ENCODE measurements at regions of chr13 and their contacts with region 1.

Region 1: DNA sequence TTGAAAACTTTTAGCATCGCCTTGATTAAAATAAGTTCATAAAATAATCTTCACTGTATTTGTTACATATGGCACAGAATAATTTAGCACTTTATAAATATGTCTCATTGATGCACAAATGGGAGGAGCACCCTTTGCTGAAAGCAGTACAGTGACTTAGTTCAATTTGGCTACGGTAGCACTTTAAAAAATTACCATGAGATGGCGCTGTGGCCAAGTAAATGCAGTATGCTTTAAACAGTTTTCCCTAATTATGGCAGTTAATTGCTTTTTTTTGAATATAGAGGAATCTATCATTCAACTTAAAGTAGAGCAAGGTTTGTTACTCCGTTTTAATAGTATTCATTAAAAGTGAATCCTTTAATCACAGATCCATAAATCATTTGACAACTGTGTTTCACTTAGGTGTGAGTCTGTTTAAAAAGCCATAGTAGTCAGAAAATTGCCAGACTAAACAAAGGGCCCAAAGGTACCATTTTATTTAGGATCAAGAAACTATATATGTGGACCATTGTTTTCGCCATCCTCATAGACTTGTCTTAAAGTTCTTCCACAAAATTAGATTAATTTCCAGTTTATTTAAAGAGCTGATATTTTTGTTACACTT is 34.7 kb upstream of the ESD start:
- H3K4me3 Mint-ChIP-seq: no peak overlapping the region
- H3K27ac Mint-ChIP-seq: no peak overlapping the region
- H3K4me1 Mint-ChIP-seq: no peaks in the 10 kb centered on the region
- H3K27me3 Mint-ChIP-seq: no peaks in the 10 kb centered on the region

Region 2: DNA sequence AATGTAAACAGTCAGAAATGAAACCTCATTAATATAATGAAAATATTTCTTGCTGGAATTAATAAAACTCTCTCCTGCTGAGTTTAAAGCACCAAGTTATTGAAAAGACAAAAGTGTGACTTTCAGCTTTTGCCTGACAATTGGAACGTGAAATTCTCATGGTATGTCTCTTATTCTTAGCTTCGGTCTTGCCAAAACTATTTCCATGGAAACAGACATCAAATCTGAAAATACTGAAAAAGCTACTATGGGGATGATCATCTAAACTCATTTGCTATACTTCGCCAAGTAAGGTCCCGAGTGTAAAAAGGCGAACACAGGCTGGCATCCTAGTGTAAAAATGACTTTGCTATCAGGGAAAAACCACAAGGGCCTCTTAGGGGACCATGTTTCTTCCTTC is 42.3 kb after region 1 on chr13:
- intact Hi-C with region 1: no loop called
- H3K4me3 Mint-ChIP-seq: no peak overlapping the region
- H3K27ac Mint-ChIP-seq: no peak overlapping the region
- H3K4me1 Mint-ChIP-seq: peaks cover 9% of the 10 kb centered on the region
- H3K27me3 Mint-ChIP-seq: no peaks in the 10 kb centered on the region

Region 3: GRCh38 chr13:46893798-46894560 is 62.3 kb after region 1 on chr13:
- intact Hi-C with region 1: loop called (anchors 5 kb)
- H3K4me3 Mint-ChIP-seq: peak overlapping the region; percentile 88
- H3K27ac Mint-ChIP-seq: peak overlapping the region; percentile 67
- H3K4me1 Mint-ChIP-seq: peaks cover 22% of the 10 kb centered on the region
- H3K27me3 Mint-ChIP-seq: peaks cover 19% of the 10 kb centered on the region

Region 4: GRCh38 chr13:47220453-47221140 is 388.9 kb after region 1 on chr13:
- intact Hi-C with region 1: no loop called
- H3K4me3 Mint-ChIP-seq: no peak overlapping the region
- H3K27ac Mint-ChIP-seq: no peak overlapping the region
- H3K4me1 Mint-ChIP-seq: no peaks in the 10 kb centered on the region
- H3K27me3 Mint-ChIP-seq: no peaks in the 10 kb centered on the region

Region 5: GRCh38 chr13:47598340-47598911 is 766.7 kb after region 1 on chr13:
- intact Hi-C with region 1: loop called (anchors 1 kb)
- H3K4me3 Mint-ChIP-seq: no peak overlapping the region
- H3K27ac Mint-ChIP-seq: no peak overlapping the region
- H3K4me1 Mint-ChIP-seq: no peaks in the 10 kb centered on the region
- H3K27me3 Mint-ChIP-seq: no peaks in the 10 kb centered on the region

Region 6: DNA sequence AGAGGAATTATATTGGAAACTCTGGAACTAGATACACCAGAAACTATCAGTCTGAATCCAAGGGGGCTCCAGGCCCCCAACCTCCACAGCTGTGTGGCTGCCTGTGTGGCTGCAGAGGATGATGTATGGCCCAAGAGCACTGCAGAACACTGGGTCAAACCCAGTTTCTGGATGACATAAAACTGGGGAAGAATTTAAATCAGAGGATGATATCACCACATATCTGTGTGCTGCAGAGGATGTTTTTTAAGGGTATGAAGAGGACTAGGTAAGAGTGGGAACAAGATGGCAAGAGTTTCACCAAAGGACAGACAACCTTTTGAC is 942.9 kb after region 1 on chr13:
- intact Hi-C with region 1: loop called (anchors 1 kb)
- H3K4me3 Mint-ChIP-seq: no peak overlapping the region
- H3K27ac Mint-ChIP-seq: no peak overlapping the region
- H3K4me1 Mint-ChIP-seq: no peaks in the 10 kb centered on the region
- H3K27me3 Mint-ChIP-seq: peaks cover 3% of the 10 kb centered on the region

Measured in dendritic cell treated with granulocyte-macrophage colony-stimulating factor and Interleukin-4, amounts not matched to agents 40 ng/mL and 50 ng/mL, for 4 days (primary cell).